Colonic mucosa (tissue), 4 donors: ENCODE measurements at regions of chr12 and their contacts with region 1.

Region 1: DNA sequence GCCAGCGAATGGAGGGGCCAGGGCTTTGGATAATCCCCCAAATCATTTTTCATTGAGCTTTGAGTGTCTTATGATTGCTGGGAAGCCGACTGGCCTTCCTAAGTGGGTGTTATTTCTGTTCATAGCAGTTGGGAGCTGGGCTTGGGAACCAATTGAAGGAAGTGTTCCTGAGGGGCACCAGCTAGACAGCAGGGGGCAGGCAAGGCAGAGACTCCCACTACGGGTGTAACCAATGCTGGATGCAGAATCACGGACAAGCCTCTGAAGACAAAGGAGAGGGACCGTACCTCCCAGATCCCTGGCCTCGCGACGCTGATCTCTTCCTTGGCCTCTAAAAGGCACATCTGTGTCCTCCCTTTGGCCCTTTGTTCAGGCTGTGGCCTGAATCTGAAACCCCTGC is 148.9 kb upstream of the PRMT8 start:
- DNase-seq: peak; percentile 23
- H3K4me3 ChIP-seq: no peak overlapping the region
- H3K27ac ChIP-seq: no peak overlapping the region
- H3K4me1 ChIP-seq: no peaks in the 10 kb centered on the region
- H3K27me3 ChIP-seq: no peaks in the 10 kb centered on the region
- CTCF ChIP-seq: no peak

Region 2: GRCh38 chr12:3453990-3454675 is 112.1 kb after region 1 on chr12:
- intact Hi-C with region 1: loop called (anchors 10 kb)
- DNase-seq: no peak
- H3K4me3 ChIP-seq: no peak overlapping the region
- H3K27ac ChIP-seq: no peak overlapping the region
- H3K4me1 ChIP-seq: no peaks in the 10 kb centered on the region
- H3K27me3 ChIP-seq: no peaks in the 10 kb centered on the region
- CTCF ChIP-seq: no peak